A549 (cell line): ENCODE measurements at regions of chr20 and their contacts with region 1.

Region 1: GRCh38 chr20:58447511-58448391 is 58.7 kb downstream of the VAPB start:
- DNase-seq: peak; percentile 48 to 62
- ATAC-seq: peak; percentile 93 to 94
- H3K4me3 ChIP-seq: no peak overlapping the region
- H3K27ac ChIP-seq: no peak overlapping the region
- H3K4me1 ChIP-seq: no peaks in the 10 kb centered on the region
- CTCF ChIP-seq: peak; percentile 74
- EP300 ChIP-seq: no peak
- POLR2A ChIP-seq: no peak
- RAD21 ChIP-seq: peak; percentile 83 to 88

Region 2: DNA sequence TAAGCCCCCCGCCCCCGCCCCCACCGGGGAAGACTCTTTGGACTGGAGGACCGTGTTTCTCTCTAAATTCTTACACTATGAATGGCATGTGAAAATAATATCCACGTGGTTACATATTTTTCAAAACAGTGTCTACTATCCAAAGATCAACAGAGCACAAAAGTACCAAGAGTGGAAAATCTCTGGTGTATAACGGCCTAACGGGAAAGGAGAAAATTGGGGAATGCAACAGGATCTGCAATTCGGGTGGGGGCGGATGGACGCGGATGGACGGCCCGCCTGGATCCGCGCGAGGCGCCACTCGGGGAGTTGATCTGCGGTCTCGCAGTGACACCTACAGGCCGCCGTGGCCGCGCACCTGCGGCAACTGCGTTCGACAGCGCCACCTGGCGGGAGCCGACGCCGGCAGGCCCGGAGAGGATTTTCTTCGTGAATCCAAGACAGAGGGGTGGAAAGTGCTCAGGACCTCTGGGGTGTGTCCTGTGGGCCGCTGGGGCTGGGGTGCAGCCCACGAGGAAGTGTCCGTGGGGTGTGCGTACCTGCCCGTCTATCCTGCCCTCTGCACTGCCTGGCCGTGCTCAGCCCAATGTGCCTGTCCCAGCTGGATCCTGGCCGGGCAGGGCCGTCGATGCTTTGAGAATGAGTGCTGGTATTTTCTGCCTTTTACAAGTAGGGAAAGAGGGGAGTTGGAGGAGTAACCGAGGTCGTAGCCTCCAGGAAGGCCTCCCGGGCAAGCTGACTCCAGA is 237.9 kb before region 1 on chr20:
- CTCF ChIA-PET with region 1: no interaction called
- POLR2A ChIA-PET with region 1: no interaction called
- DNase-seq: peak; percentile 78 to 80
- ATAC-seq: peak; percentile 78 to 90
- H3K4me3 ChIP-seq: no peak overlapping the region
- H3K27ac ChIP-seq: peak overlapping the region; percentile 19 to 77; a peak in 5 of 6 replicates
- H3K4me1 ChIP-seq: 0 out of 3 replicates have a peak, but pooled peaks cover 3% of the 10 kb centered on the region
- CTCF ChIP-seq: peak; percentile 100
- EP300 ChIP-seq: no peak
- POLR2A ChIP-seq: no peak
- RAD21 ChIP-seq: peak; percentile 99 to 100

Region 3: GRCh38 chr20:58246346-58246745 is 201.4 kb before region 1 on chr20:
- CTCF ChIA-PET with region 1: interaction called, 29 read pairs
- POLR2A ChIA-PET with region 1: no interaction called
- DNase-seq: peak; percentile 25 to 67
- ATAC-seq: peak; percentile 70 to 86
- H3K4me3 ChIP-seq: no peak overlapping the region
- H3K27ac ChIP-seq: no peak overlapping the region
- H3K4me1 ChIP-seq: peaks cover 6% of the 10 kb centered on the region
- CTCF ChIP-seq: peak; percentile 51
- EP300 ChIP-seq: no peak
- POLR2A ChIP-seq: no peak
- RAD21 ChIP-seq: peak; percentile 52 to 62; a peak in 4 of 5 replicates

Region 4: DNA sequence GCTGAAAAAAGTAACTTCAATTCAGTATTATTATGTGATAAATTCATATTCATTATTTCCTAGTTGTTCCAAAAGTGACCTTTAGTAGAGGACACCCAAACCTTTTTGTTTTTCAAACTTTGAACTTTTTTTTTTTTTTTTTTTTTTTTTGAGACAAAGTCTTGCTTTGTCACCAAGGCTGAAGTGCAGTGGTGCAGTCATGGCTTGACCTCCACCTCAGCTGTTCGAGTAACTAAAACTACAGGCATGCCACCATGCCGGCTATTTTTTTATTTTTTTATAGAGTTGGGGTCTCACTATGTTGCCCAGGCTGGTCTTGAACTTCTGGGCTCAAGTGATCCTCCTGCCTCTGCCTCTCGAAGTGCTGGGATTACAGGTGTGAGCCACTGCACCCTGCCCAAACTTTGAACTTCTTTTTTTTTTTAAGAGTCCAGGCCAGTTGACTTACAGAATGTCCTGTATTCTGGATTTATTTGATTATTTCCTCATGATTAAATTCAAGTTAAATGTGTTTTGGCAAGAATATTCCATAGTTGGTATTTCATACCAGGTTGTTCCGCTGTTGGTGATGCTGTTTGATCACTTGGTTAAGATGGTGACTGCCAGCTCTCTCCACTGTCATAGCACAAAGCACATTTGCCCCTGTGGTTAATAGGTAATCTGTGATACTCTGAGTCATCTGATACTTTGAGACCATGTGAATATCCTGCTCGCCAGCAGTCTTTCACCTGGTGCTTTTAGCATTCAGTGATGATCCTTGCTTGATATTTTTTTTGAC is 10.7 kb before region 1 on chr20:
- CTCF ChIA-PET with region 1: interaction called, 19 read pairs
- POLR2A ChIA-PET with region 1: no interaction called
- DNase-seq: peak; percentile 45 to 53
- ATAC-seq: peak; percentile 87 to 91; a peak in 5 of 6 replicates
- H3K4me3 ChIP-seq: no peak overlapping the region
- H3K27ac ChIP-seq: peak overlapping the region in 1 of 2 experiments; percentile 48; a peak in 3 of 6 replicates
- H3K4me1 ChIP-seq: peaks cover 35% of the 10 kb centered on the region
- CTCF ChIP-seq: no peak
- EP300 ChIP-seq: no peak
- POLR2A ChIP-seq: no peak
- RAD21 ChIP-seq: no peak

Region 5: GRCh38 chr20:58650776-58651558 is 203.2 kb after region 1 on chr20 and contains the start of gene STX16:
- CTCF ChIA-PET with region 1: interaction called, 12 read pairs
- POLR2A ChIA-PET with region 1: no interaction called
- DNase-seq: peak; percentile 96 to 99
- ATAC-seq: peak; percentile 96 to 98
- H3K4me3 ChIP-seq: peak within 1 kb of the TSS; percentile 91
- H3K27ac ChIP-seq: peak within 1 kb of the TSS; percentile 90 to 95
- H3K4me1 ChIP-seq: peaks cover 26% of the 10 kb centered on the region; the same call in 2 of the 3 replicates
- CTCF ChIP-seq: peak; percentile 58
- EP300 ChIP-seq: no peak
- POLR2A ChIP-seq: peak; percentile 44
- RAD21 ChIP-seq: peak; percentile 0 to 35; a peak in 3 of 5 replicates
- polyA plus RNA-seq, gene STX16: 63.0 and 71.6 TPM in 2 replicates